ENCODE measurements at regions of chr12 and their contacts with region 1.

Region 1: DNA sequence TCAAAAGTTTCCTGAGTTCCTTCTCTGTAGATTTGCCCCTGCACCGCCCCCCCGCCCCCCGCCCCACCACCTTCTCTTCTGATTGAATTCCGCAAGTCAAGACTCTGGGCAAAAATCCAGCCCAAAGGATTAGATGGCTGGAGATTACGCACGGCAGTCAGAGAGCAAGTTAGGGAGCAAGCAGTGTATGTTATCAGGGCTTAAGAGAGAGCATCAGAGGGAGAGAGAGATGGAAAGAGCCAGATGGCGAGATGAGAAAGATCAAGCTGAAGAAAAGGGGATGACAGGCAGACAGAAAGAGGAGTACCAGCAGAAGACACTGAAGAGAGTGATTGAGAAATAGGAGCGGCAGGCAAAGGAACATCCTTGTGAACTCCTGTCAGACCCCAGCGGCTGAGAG is 13.9 kb upstream of the ANKRD33 start:
- DNase-seq: no peak
- ATAC-seq: no peak
- H3K4me3 Mint-ChIP-seq: no peak overlapping the region
- H3K27ac Mint-ChIP-seq: no peak overlapping the region
- H3K4me1 Mint-ChIP-seq: peaks cover 7% of the 10 kb centered on the region
- H3K27me3 Mint-ChIP-seq: peaks cover 23% of the 10 kb centered on the region

Region 2: GRCh38 chr12:51589060-51589459 is 285.0 kb before region 1 on chr12:
- CTCF ChIA-PET with region 1: no interaction called
- POLR2A ChIA-PET with region 1: no interaction called
- DNase-seq: no peak
- ATAC-seq: no peak
- H3K4me3 Mint-ChIP-seq: no peak overlapping the region
- H3K27ac Mint-ChIP-seq: no peak overlapping the region
- H3K4me1 Mint-ChIP-seq: peaks cover 22% of the 10 kb centered on the region
- H3K27me3 Mint-ChIP-seq: peaks cover 59% of the 10 kb centered on the region

Region 3: GRCh38 chr12:51823875-51824565 is 50.0 kb before region 1 on chr12:
- CTCF ChIA-PET with region 1: interaction called, 11 read pairs
- POLR2A ChIA-PET with region 1: interaction called, 3 read pairs
- DNase-seq: peak; percentile 41
- ATAC-seq: no peak
- H3K4me3 Mint-ChIP-seq: no peak overlapping the region
- H3K27ac Mint-ChIP-seq: no peak overlapping the region
- H3K4me1 Mint-ChIP-seq: peaks cover 29% of the 10 kb centered on the region
- H3K27me3 Mint-ChIP-seq: no peaks in the 10 kb centered on the region

Region 4: DNA sequence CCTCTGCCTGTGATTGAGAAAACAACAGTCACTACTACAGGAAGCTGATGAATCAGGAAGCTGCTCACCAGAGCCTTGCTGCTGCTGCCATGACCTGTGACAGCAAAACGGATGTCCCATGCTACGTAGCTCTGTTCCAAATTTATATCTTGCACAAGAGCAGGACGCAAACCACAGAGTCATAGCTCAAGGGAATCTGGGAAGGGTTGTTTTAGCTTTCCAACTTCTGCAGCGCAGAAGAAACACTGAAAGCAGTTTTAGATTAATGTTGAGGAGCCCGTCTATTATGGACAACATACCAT is 12.0 kb after region 1 on chr12:
- CTCF ChIA-PET with region 1: interaction called, 20 read pairs
- POLR2A ChIA-PET with region 1: interaction called, 3 read pairs
- DNase-seq: peak; percentile 75
- ATAC-seq: peak; percentile 91
- H3K4me3 Mint-ChIP-seq: peak overlapping the region; percentile 28
- H3K27ac Mint-ChIP-seq: peak overlapping the region; percentile 93
- H3K4me1 Mint-ChIP-seq: peaks cover 17% of the 10 kb centered on the region
- H3K27me3 Mint-ChIP-seq: peaks cover 2% of the 10 kb centered on the region

Region 5: DNA sequence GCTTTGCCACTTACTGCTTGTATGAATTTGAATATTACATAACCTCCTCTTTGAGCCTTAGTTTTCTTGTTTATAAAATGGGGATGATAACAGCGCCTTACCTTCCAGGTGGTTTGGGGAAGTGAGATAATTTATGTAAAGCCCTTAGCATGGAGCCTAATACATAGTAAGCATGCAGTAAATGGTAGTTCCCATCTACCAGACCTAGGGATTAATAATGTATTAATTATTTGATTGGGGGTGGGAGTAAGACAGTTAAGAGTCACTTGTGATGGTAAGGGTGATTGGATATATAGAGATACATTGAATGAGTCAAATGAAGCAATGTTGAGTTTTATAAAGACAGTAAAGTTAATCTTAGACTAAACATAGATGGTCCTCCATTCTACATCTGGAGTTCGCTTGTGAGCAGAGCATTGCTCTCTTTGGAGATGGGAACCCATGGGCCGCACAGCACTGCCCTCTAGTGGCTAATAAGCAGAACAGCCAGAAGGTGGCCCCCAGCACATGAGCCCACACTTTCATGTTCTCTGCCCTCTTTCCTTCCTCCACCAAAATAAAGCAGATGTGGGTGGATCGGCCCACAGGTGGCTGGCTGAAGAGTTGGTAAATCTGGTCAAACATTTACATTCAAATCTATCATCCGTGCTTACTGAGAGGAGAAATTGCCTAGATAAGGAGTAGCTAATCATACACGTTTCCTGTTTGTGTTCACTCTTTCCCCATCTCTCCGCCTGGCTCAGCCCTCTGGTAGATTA is 106.2 kb after region 1 on chr12:
- CTCF ChIA-PET with region 1: interaction called, 10 read pairs
- POLR2A ChIA-PET with region 1: no interaction called
- DNase-seq: peak; percentile 79
- ATAC-seq: peak; percentile 96
- H3K4me3 Mint-ChIP-seq: no peak overlapping the region
- H3K27ac Mint-ChIP-seq: peak overlapping the region; percentile 51
- H3K4me1 Mint-ChIP-seq: peaks cover 38% of the 10 kb centered on the region
- H3K27me3 Mint-ChIP-seq: no peaks in the 10 kb centered on the region

Region 6: DNA sequence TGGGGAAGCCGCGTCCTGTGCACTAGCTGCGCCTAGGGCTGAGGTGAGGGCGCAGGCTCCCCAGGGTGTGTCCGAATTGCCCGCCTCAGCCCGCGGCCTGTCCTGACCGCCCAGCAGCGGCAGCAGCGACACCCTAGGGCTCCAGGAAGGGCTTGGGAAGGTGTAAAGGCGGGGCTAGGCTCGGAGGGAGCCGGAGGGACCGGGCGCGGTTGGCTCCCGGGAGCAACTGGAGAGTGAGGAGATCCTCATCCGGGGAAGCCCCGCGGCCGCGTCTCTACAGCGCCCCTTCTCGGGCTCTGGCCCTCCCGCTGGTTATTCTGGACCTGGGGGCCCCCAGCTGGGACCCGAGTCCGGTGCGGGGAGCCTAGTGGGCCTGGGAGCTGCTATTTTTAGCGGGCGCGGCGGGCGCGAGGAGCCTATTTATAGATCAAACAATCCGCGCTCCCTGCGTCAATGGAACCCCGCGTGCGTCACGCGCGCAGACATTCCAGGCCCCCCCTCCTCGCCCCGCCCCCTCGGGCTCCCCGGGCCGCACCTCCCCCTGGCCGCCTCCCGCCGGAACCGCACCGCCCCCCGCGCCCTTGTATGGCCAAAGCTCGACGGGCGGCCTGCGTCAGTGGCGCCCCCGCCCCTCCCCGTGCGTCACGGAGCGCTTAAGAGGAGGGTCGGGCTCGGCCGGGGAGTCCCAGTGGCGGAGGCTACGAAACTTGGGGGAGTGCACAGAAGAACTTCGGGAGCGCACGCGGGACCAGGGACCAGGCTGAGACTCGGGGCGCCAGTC is 176.9 kb after region 1 on chr12 and contains the start of gene NR4A1:
- CTCF ChIA-PET with region 1: no interaction called
- POLR2A ChIA-PET with region 1: no interaction called
- DNase-seq: peak; percentile 98
- ATAC-seq: peak; percentile 85
- H3K4me3 Mint-ChIP-seq: peak within 1 kb of the TSS; percentile 86
- H3K27ac Mint-ChIP-seq: peak within 1 kb of the TSS; percentile 98
- H3K4me1 Mint-ChIP-seq: peaks cover 49% of the 10 kb centered on the region
- H3K27me3 Mint-ChIP-seq: no peaks in the 10 kb centered on the region
- total RNA-seq, gene NR4A1: 4.3 to 5.6 TPM